Caco-2 (cell line): ENCODE measurements at regions of chrX and their contacts with region 1.

Region 1: GRCh38 chrX:2913118-2913517 is 16.0 kb downstream of the ARSD start:
- DNase-seq: peak in 1 of 2 experiments; percentile 30
- H3K4me3 ChIP-seq: no peak overlapping the region
- H3K4me3 Mint-ChIP-seq: peak overlapping the region; percentile 29
- H3K27ac Mint-ChIP-seq: peak overlapping the region; percentile 29
- H3K4me1 ChIP-seq: peaks cover 7% of the 10 kb centered on the region
- H3K4me1 Mint-ChIP-seq: peaks cover 25% of the 10 kb centered on the region
- H3K27me3 ChIP-seq: no peaks in the 10 kb centered on the region
- H3K27me3 Mint-ChIP-seq: no peaks in the 10 kb centered on the region
- CTCF ChIP-seq: peak in 1 of 2 experiments; percentile 23

Region 2: GRCh38 chrX:2928191-2928763 is 15.2 kb after region 1 on chrX:
- CTCF ChIA-PET with region 1: no interaction called
- POLR2A ChIA-PET with region 1: no interaction called
- intact Hi-C with region 1: loop called (anchors 2 kb)
- DNase-seq: no peak
- H3K4me3 ChIP-seq: no peak overlapping the region
- H3K4me3 Mint-ChIP-seq: peak overlapping the region; percentile 63
- H3K27ac Mint-ChIP-seq: no peak overlapping the region
- H3K4me1 ChIP-seq: no peaks in the 10 kb centered on the region; the same call in 1 of the 2 replicates
- H3K4me1 Mint-ChIP-seq: no peaks in the 10 kb centered on the region
- H3K27me3 ChIP-seq: no peaks in the 10 kb centered on the region
- H3K27me3 Mint-ChIP-seq: no peaks in the 10 kb centered on the region
- CTCF ChIP-seq: no peak

Region 3: GRCh38 chrX:3052860-3053259 is 139.7 kb after region 1 on chrX:
- CTCF ChIA-PET with region 1: no interaction called
- POLR2A ChIA-PET with region 1: no interaction called
- intact Hi-C with region 1: no loop called
- DNase-seq: no peak
- H3K4me3 ChIP-seq: no peak overlapping the region
- H3K4me3 Mint-ChIP-seq: no peak overlapping the region
- H3K27ac Mint-ChIP-seq: no peak overlapping the region
- H3K4me1 ChIP-seq: no peaks in the 10 kb centered on the region
- H3K4me1 Mint-ChIP-seq: peaks cover 7% of the 10 kb centered on the region
- H3K27me3 ChIP-seq: no peaks in the 10 kb centered on the region
- H3K27me3 Mint-ChIP-seq: no peaks in the 10 kb centered on the region
- CTCF ChIP-seq: no peak